Common myeloid progenitor, CD34-positive (primary cell): ENCODE measurements at regions of chr10 and their contacts with region 1.

Region 1: DNA sequence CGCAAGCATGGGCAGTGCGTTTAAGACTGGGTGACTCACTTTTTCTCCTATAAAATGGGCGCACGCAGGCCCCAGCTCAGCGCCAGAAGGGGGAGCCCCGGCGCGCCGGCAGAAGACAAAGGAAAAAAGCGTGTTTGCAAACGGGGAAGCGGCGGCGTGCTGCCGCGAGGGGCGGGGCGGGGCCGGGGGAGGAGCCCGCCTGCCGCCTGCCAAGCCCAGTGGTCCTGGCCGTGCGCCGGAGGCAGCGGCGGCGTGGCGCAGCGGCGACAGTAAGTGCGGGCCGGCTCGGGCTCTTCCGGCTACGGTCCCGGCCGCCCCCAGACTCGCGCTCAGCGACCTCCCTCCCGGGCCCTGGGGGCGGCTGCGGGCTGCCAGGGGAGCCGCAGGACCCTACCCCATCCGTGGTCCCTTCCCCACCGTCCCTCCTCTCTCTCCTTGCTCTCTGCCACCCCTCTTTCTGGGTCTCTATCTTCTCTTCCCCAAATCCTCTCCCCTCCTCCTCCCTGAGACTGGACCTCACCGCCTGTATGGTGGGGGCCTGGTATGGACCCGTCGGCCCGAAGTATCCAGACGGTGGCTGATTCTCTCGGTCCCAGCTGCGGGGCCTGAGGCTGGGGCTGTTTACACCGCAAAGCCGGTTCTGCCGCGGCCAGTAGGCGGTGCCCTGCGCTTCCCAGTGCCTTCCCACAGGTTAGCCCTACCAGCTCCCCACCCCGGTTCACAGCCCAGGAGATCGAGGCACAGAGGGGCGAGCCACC is at the start of gene SLC29A3:
- DNase-seq: peak; percentile 82 to 91 (median 85)
- H3K4me3 ChIP-seq: peak within 1 kb of the TSS; percentile 58 to 88 (median 81)
- H3K27ac ChIP-seq: peak within 1 kb of the TSS; percentile 7 to 50
- H3K4me1 ChIP-seq: peaks cover 3 to 43% (median 37%) of the 10 kb centered on the region in 4 experiments
- H3K27me3 ChIP-seq: no peaks in the 10 kb centered on the region

Region 2: GRCh38 chr10:71333129-71333887 is 14.1 kb after region 1 on chr10:
- CTCF ChIA-PET with region 1: interaction called, 68 read pairs
- POLR2A ChIA-PET with region 1: interaction called, 5 read pairs
- DNase-seq: peak in 2 of 3 donors; percentile 28 to 44
- H3K4me3 ChIP-seq: no peak overlapping the region
- H3K27ac ChIP-seq: no peak overlapping the region
- H3K4me1 ChIP-seq: peaks cover 4 to 20% (median 14%) of the 10 kb centered on the region in 4 experiments
- H3K27me3 ChIP-seq: no peaks in the 10 kb centered on the region

Region 3: DNA sequence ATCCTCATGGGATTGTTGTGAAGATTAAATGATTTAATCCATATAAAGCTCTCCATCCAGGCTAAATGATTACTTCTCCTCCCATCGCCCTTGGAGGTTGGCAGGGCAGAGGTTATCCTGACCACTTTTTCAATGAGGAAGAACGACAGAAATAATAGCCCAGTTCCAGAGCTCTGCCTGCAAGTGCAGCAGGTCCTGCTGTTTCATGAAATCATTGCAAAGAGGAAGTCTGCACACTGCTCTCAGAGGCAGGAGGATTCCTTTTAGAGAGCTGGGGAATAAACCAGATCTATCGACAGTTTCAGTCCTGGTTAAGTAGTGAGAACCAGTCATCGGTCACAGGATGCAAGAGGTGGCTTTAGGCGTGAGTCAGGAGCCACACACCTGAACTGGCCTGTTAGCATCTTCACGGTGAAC is 52.5 kb after region 1 on chr10:
- CTCF ChIA-PET with region 1: interaction called, 17 read pairs
- POLR2A ChIA-PET with region 1: no interaction called
- DNase-seq: peak in 2 of 3 donors; percentile 60 to 77
- H3K4me3 ChIP-seq: no peak overlapping the region
- H3K27ac ChIP-seq: no peak overlapping the region
- H3K4me1 ChIP-seq: peaks cover 5 to 38% (median 15%) of the 10 kb centered on the region in 4 experiments
- H3K27me3 ChIP-seq: no peaks in the 10 kb centered on the region

Region 4: GRCh38 chr10:71383972-71384687 is 64.9 kb after region 1 on chr10:
- CTCF ChIA-PET with region 1: interaction called, 17 read pairs
- POLR2A ChIA-PET with region 1: interaction called, 3 read pairs
- DNase-seq: peak; percentile 58 to 81 (median 76)
- H3K4me3 ChIP-seq: no peak overlapping the region
- H3K27ac ChIP-seq: no peak overlapping the region
- H3K4me1 ChIP-seq: peaks cover 1 to 20% (median 11%) of the 10 kb centered on the region in 4 experiments
- H3K27me3 ChIP-seq: peaks cover 0 to 1% (median 0%) of the 10 kb centered on the region in 5 experiments

Region 5: DNA sequence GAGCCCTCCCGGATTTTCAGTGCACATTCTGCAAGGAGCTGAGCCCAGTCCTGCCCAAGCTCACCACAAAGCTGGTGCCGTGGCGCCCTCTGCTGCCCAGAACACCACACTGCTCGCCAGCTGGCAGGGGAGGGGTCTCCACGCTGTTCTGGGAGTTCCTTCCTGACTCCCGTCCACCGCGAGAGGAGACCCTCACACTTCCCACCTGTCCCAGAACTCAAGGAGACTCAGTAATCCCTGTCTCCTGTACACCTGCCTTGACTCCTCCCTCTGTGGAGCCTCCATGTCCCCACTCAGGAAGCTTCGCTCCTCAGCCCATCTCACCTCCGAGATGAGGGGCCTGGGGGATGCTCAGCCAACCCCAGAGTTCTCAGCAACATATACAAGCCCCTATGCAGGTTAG is 389.1 kb after region 1 on chr10:
- CTCF ChIA-PET with region 1: interaction called, 15 read pairs
- POLR2A ChIA-PET with region 1: no interaction called
- DNase-seq: peak; percentile 41 to 54 (median 54)
- H3K4me3 ChIP-seq: no peak overlapping the region
- H3K27ac ChIP-seq: no peak overlapping the region
- H3K4me1 ChIP-seq: peaks cover 0 to 45% (median 17%) of the 10 kb centered on the region in 4 experiments
- H3K27me3 ChIP-seq: no peaks in the 10 kb centered on the region